CD14-positive monocyte (primary cell): ENCODE measurements at regions of chr6 and their contacts with region 1.

Region 1: DNA sequence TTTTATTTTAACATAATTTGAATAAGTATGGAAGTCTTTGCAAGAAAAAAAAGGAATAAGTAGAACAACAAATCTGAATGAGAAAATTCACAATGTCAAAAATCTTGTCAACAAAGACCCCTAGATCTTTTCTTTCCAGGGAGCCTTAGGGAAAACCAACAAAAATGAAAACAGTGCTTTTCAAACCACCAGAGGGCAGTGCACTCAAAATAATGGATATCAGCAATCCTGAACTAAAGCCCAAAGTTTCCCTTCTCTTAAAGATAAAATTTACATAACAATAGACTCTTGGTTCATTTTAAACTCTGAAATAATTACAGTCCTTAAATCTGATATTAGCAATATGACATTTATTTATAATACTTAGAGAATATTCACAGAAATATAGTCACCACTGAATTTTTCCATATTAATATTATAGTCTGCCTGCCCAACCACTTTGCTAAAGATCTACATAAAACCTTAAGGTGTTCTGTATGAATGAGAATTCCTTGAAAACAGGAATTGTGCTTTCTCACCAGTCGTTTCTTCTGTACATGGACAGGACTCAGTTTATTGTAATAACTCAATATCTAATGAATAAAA is 105.3 kb upstream of the BMP5 start:
- DNase-seq: peak; percentile 13 to 51 (median 37)
- H3K4me3 ChIP-seq: no peak overlapping the region
- H3K4me3 Mint-ChIP-seq: no peak overlapping the region
- H3K27ac ChIP-seq: no peak overlapping the region
- H3K27ac Mint-ChIP-seq: no peak overlapping the region
- H3K4me1 ChIP-seq: no peaks in the 10 kb centered on the region
- H3K4me1 Mint-ChIP-seq: no peaks in the 10 kb centered on the region
- H3K27me3 ChIP-seq: no peaks in the 10 kb centered on the region
- H3K27me3 Mint-ChIP-seq: peaks cover 0 to 6% (median 5%) of the 10 kb centered on the region in 3 donors
- CTCF ChIP-seq: peak; percentile 61

Region 2: GRCh38 chr6:55913213-55914195 is 67.2 kb before region 1 on chr6:
- intact Hi-C with region 1: no loop called
- DNase-seq: no peak
- H3K4me3 ChIP-seq: no peak overlapping the region
- H3K4me3 Mint-ChIP-seq: no peak overlapping the region
- H3K27ac ChIP-seq: no peak overlapping the region
- H3K27ac Mint-ChIP-seq: no peak overlapping the region
- H3K4me1 ChIP-seq: no peaks in the 10 kb centered on the region
- H3K4me1 Mint-ChIP-seq: no peaks in the 10 kb centered on the region
- H3K27me3 ChIP-seq: no peaks in the 10 kb centered on the region
- H3K27me3 Mint-ChIP-seq: peaks cover 0 to 1% (median 0%) of the 10 kb centered on the region in 3 donors
- CTCF ChIP-seq: no peak

Region 3: GRCh38 chr6:55960344-55960743 is 20.4 kb before region 1 on chr6:
- intact Hi-C with region 1: loop called in 1 of 2 experiments (anchors 1 kb)
- DNase-seq: no peak
- H3K4me3 ChIP-seq: no peak overlapping the region
- H3K4me3 Mint-ChIP-seq: no peak overlapping the region
- H3K27ac ChIP-seq: no peak overlapping the region
- H3K27ac Mint-ChIP-seq: no peak overlapping the region
- H3K4me1 ChIP-seq: no peaks in the 10 kb centered on the region
- H3K4me1 Mint-ChIP-seq: no peaks in the 10 kb centered on the region
- H3K27me3 ChIP-seq: no peaks in the 10 kb centered on the region
- H3K27me3 Mint-ChIP-seq: peaks cover 0 to 5% (median 0%) of the 10 kb centered on the region in 3 donors
- CTCF ChIP-seq: no peak

Region 4: GRCh38 chr6:56292505-56293181 is 311.9 kb after region 1 on chr6:
- intact Hi-C with region 1: loop called (anchors 2 to 5 kb)
- DNase-seq: peak; percentile 6 to 40 (median 34)
- H3K4me3 ChIP-seq: no peak overlapping the region
- H3K4me3 Mint-ChIP-seq: no peak overlapping the region
- H3K27ac ChIP-seq: no peak overlapping the region
- H3K27ac Mint-ChIP-seq: no peak overlapping the region
- H3K4me1 ChIP-seq: no peaks in the 10 kb centered on the region
- H3K4me1 Mint-ChIP-seq: peaks cover 5% of the 10 kb centered on the region
- H3K27me3 ChIP-seq: no peaks in the 10 kb centered on the region
- H3K27me3 Mint-ChIP-seq: peaks cover 2 to 4% (median 3%) of the 10 kb centered on the region in 3 donors
- CTCF ChIP-seq: peak; percentile 57